Activated B cell treated with CpG ODN at 0.5 μM for 24 hours (primary cell): ENCODE measurements at regions of chr11 and their contacts with region 1.

Region 1: GRCh38 chr11:49533204-49533603 is 324.8 kb upstream of the FOLH1 start:
- DNase-seq: no peak
- ATAC-seq: no peak
- H3K4me3 Mint-ChIP-seq: no peak overlapping the region
- H3K27ac Mint-ChIP-seq: no peak overlapping the region
- H3K4me1 Mint-ChIP-seq: no peaks in the 10 kb centered on the region
- H3K27me3 Mint-ChIP-seq: no peaks in the 10 kb centered on the region
- CTCF ChIP-seq: no peak

Region 2: GRCh38 chr11:48172818-48173609 is 1360.2 kb before region 1 on chr11:
- CTCF ChIA-PET with region 1: no interaction called
- POLR2A ChIA-PET with region 1: no interaction called
- intact Hi-C with region 1: loop called (anchors 5 kb)
- DNase-seq: peak; percentile 37
- ATAC-seq: peak; percentile 71
- H3K4me3 Mint-ChIP-seq: no peak overlapping the region
- H3K27ac Mint-ChIP-seq: no peak overlapping the region
- H3K4me1 Mint-ChIP-seq: peaks cover 29% of the 10 kb centered on the region
- H3K27me3 Mint-ChIP-seq: no peaks in the 10 kb centered on the region
- CTCF ChIP-seq: peak; percentile 69

Region 3: GRCh38 chr11:49316180-49316579 is 217.0 kb before region 1 on chr11:
- CTCF ChIA-PET with region 1: no interaction called
- POLR2A ChIA-PET with region 1: no interaction called
- intact Hi-C with region 1: no loop called
- DNase-seq: no peak
- ATAC-seq: no peak
- H3K4me3 Mint-ChIP-seq: no peak overlapping the region
- H3K27ac Mint-ChIP-seq: no peak overlapping the region
- H3K4me1 Mint-ChIP-seq: no peaks in the 10 kb centered on the region
- H3K27me3 Mint-ChIP-seq: no peaks in the 10 kb centered on the region
- CTCF ChIP-seq: no peak

Region 4: GRCh38 chr11:49505231-49505630 is 28.0 kb before region 1 on chr11:
- CTCF ChIA-PET with region 1: no interaction called
- POLR2A ChIA-PET with region 1: no interaction called
- intact Hi-C with region 1: no loop called
- DNase-seq: no peak
- ATAC-seq: no peak
- H3K4me3 Mint-ChIP-seq: no peak overlapping the region
- H3K27ac Mint-ChIP-seq: no peak overlapping the region
- H3K4me1 Mint-ChIP-seq: no peaks in the 10 kb centered on the region
- H3K27me3 Mint-ChIP-seq: no peaks in the 10 kb centered on the region
- CTCF ChIP-seq: no peak